ENCODE measurements at regions of chr14 and their contacts with region 1.

Region 1: DNA sequence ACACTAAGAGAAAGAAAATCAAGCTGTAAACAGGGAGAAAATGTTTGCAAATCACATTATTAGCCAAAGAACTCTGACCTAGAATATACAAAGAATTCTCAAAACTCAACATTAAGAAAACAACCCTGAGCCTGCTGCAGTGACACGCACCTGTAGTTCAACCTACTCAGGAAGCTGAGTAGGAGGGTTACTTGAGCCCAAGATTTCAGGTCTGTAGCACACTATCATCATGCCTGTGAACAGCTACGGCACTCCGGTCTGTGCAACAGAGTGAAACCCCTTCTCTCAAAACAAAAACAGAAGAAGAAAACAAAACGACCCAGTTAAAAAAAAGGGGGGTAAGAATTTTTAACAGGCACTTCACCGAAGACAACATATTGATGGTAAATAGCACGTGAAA is 20.8 kb downstream of the SAV1 start:
- DNase-seq: no peak
- ATAC-seq: no peak
- H3K4me3 ChIP-seq: no peak overlapping the region
- H3K27ac ChIP-seq: peak overlapping the region; percentile 51
- H3K4me1 ChIP-seq: peaks cover 36% of the 10 kb centered on the region
- H3K27me3 ChIP-seq: no peaks in the 10 kb centered on the region
- CTCF ChIP-seq: no peak

Region 2: GRCh38 chr14:50631408-50631821 is 15.9 kb before region 1 on chr14:
- CTCF ChIA-PET with region 1: no interaction called
- POLR2A ChIA-PET with region 1: interaction called, 5 read pairs
- intact Hi-C with region 1: loop called (anchors 2 kb)
- DNase-seq: no peak
- ATAC-seq: peak; percentile 64
- H3K4me3 ChIP-seq: no peak overlapping the region
- H3K27ac ChIP-seq: no peak overlapping the region
- H3K4me1 ChIP-seq: no peaks in the 10 kb centered on the region
- H3K27me3 ChIP-seq: no peaks in the 10 kb centered on the region
- CTCF ChIP-seq: no peak